ENCODE measurements at regions of chr7 and their contacts with region 1.

Region 1: GRCh38 chr7:44973610-44974401 is 5.0 kb downstream of the MYO1G start:
- DNase-seq: peak in 3 of 5 donors; percentile 52 to 60 (median 54)
- ATAC-seq: peak in 3 of 4 donors; percentile 58 to 71 (median 68)
- H3K4me3 ChIP-seq: no peak overlapping the region
- H3K27ac ChIP-seq: no peak overlapping the region
- H3K4me1 ChIP-seq: peaks cover 0 to 28% (median 0%) of the 10 kb centered on the region in 12 donors
- H3K27me3 ChIP-seq: no peaks in the 10 kb centered on the region
- CTCF ChIP-seq: peak; percentile 31 to 66 (median 55)
- POLR2A ChIP-seq: no peak

Region 2: GRCh38 chr7:44894888-44895580 is 78.8 kb before region 1 on chr7:
- intact Hi-C with region 1: no loop called
- DNase-seq: no peak
- ATAC-seq: no peak
- H3K4me3 ChIP-seq: no peak overlapping the region
- H3K27ac ChIP-seq: no peak overlapping the region
- H3K4me1 ChIP-seq: peaks cover 0 to 9% (median 0%) of the 10 kb centered on the region in 12 donors
- H3K27me3 ChIP-seq: no peaks in the 10 kb centered on the region
- CTCF ChIP-seq: no peak
- POLR2A ChIP-seq: no peak

Region 3: GRCh38 chr7:45278763-45279398 is 305.1 kb after region 1 on chr7:
- intact Hi-C with region 1: loop called in 1 of 10 experiments (anchors 10 kb)
- DNase-seq: no peak
- ATAC-seq: no peak
- H3K4me3 ChIP-seq: no peak overlapping the region
- H3K27ac ChIP-seq: no peak overlapping the region
- H3K4me1 ChIP-seq: no peaks in the 10 kb centered on the region
- H3K27me3 ChIP-seq: peaks cover 0 to 2% (median 0%) of the 10 kb centered on the region in 9 donors
- CTCF ChIP-seq: no peak
- POLR2A ChIP-seq: no peak